Cardiac septum (tissue), 1 donor: ENCODE measurements at regions of chr3 and their contacts with region 1.

Region 1: GRCh38 chr3:197354319-197355001 is 56.0 kb upstream of the DLG1 start:
- DNase-seq: peak; percentile 79

Region 2: DNA sequence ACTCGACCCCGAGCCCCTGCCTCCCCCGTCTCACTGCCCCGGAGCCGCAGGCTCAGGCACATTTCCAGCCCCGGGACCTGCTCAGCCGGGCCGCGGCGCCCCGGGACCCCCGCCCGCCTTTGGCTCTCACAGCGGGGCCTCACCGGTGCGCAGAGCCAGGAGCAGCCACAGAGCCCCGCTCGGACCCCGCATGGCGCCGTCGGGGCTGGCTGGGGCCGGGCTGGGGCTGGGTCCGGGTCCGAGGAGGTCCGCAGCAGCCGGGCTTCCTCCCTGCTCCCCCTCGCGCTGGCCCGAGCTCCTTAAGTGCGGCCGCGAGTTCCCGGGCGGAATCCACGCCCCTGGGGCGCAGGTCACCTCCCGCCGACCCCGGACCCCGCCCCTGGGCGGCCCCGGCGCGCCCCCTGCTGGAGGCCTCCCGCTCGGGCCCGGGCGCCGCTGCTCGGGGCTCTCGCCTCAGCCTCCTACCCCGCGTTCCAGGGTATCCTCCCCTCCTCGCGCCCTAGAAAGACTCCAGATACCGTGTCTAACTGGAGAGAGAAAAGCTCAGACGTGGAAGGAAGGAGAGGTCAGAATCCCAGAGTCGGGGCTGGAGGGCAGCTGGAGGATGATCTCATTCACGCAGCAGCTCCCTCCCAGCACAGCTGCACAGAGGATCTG is 324.8 kb before region 1 on chr3 and contains the start of gene MELTF:
- intact Hi-C with region 1: loop called (anchors 5 kb)
- DNase-seq: peak; percentile 80
- total RNA-seq, gene MELTF: 10.8 TPM

Region 3: GRCh38 chr3:197298341-197298857 is 56.1 kb before region 1 on chr3 and contains the start of gene DLG1:
- intact Hi-C with region 1: loop called (anchors 5 kb)
- DNase-seq: peak; percentile 87
- total RNA-seq, gene DLG1: 113 TPM

Region 4: DNA sequence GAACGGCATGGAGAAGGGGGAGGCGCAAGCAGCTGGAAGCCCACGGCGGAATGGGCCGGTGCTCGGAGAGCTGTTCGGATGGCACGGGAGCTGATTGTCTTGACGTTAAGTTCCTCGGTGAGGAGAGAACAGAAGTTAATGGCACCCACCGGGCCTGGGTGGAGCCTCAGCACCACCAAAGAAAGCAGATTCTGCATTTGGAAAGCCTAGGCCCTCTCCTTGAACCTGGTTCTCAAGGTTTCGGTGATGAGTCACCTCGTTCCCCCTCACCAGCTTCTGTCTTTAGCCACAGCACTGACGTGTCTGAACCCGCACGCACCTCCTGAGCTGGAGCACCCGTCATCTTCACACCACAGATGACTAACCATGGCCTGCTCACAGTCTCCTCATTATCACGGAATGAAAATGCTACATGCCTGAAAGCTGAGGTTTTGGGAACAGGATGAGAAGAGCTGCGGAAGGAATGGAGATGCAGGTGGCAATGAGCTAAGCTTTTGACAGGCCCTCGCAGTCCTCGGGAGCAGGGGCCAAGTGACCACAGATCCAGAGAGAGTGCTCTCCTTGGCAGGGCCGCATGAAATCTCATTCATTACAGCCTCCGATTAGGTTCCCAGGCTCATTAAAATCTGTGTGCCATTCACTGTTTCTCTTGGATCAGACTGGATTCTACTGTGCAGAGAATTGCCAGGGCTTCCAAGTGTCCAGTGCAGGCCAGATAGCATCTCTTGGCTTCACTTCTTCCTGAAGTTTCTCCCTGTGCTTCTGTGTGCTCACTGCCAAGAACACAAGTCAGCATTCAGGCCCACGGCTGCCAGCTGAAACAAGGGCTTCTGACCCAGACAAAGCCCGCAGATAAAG is 40.2 kb after region 1 on chr3:
- intact Hi-C with region 1: loop called (anchors 2 kb)
- DNase-seq: peak; percentile 81

Region 5: DNA sequence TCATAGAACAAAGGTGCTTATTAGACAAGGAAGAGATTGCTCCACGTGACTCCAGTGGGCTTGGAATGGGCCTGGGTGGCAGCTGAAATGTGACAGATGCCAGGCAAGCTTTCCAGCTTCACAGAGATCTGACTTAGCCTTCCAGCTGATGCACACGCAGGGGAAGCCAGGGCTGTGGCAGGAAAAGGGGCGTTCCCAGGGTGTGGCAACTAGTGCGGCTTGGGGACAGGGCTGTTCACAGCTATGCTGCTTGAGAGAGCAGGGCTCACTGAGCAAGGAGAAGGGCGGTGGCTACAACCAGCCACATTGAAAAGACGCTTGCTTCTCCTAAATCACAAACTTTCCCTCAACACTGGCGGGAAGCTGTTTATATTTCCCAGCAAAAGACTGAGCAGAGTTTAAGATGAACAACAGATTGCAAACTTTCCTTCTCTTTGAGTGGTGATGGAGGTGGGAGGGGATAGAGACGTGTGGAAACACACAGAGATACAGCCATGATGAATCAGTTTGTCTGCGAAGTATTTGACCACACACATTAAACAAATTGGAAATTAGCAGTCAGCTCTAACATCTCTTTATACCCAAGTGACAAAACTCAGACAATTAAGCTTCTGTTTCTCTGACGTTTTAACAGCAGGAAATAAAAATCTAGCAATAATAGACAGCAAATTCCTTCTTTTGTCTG is 73.8 kb after region 1 on chr3:
- intact Hi-C with region 1: loop called (anchors 1 kb)
- DNase-seq: peak; percentile 84